ENCODE measurements at regions of chr18 and their contacts with region 1.

Region 1: DNA sequence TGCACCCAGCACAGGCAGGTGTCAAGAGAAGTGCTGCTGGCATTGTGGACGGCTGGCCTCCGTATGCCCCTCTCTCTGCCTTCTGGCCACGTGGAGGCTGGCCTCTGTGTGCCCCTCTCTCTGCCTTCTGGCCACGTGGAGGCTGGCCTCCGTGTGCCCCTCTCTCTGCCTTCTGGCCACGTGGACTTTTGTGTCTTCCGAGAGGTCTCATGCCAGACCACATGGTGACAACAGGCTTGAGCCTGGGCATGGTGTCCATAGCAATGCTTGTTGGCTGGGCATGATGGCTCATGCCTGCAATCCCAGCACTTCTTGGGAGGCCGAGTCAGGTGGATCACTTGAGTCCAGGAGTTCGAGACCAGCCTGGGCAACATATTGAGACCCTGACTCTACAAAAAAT is 19.3 kb upstream of the SERPINB13 start:
- DNase-seq: no peak
- H3K4me3 ChIP-seq: no peak overlapping the region
- H3K27ac ChIP-seq: no peak overlapping the region
- H3K4me1 ChIP-seq: peaks cover 4% of the 10 kb centered on the region
- H3K27me3 ChIP-seq: no peaks in the 10 kb centered on the region
- CTCF ChIP-seq: no peak

Region 2: DNA sequence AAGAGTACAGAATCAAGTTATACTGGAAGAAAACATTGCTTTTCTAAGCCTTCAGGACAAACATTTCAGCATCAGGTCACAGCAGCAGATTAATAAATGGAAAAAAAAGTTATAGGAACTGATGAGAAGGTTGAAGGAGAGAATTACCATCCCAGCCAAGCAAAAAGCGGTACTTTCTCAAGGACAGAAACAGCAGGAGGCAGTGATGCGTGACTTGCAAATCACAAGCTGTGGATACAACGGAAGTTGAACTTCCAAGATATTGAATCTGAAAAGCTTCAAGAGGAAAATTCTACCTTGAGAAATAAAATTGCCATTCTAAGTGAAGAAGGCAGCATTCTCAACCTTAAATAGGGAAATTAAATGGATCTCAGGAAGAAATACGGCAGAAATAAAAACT is 44.2 kb before region 1 on chr18:
- CTCF ChIA-PET with region 1: no interaction called
- POLR2A ChIA-PET with region 1: no interaction called
- intact Hi-C with region 1: loop called (anchors 2 kb)
- DNase-seq: peak; percentile 38
- H3K4me3 ChIP-seq: no peak overlapping the region
- H3K27ac ChIP-seq: no peak overlapping the region
- H3K4me1 ChIP-seq: no peaks in the 10 kb centered on the region
- H3K27me3 ChIP-seq: no peaks in the 10 kb centered on the region
- CTCF ChIP-seq: 0 out of 2 replicates have a peak, but pooled peaks have one; percentile 15

Region 3: GRCh38 chr18:63648241-63648640 is 80.4 kb after region 1 on chr18:
- CTCF ChIA-PET with region 1: no interaction called
- POLR2A ChIA-PET with region 1: no interaction called
- intact Hi-C with region 1: no loop called
- DNase-seq: peak; percentile 30
- H3K4me3 ChIP-seq: no peak overlapping the region
- H3K27ac ChIP-seq: no peak overlapping the region
- H3K4me1 ChIP-seq: peaks cover 7% of the 10 kb centered on the region
- H3K27me3 ChIP-seq: no peaks in the 10 kb centered on the region
- CTCF ChIP-seq: no peak

Measured in A673 (cell line).